ENCODE measurements at regions of chr19 and their contacts with region 1.

Region 1: DNA sequence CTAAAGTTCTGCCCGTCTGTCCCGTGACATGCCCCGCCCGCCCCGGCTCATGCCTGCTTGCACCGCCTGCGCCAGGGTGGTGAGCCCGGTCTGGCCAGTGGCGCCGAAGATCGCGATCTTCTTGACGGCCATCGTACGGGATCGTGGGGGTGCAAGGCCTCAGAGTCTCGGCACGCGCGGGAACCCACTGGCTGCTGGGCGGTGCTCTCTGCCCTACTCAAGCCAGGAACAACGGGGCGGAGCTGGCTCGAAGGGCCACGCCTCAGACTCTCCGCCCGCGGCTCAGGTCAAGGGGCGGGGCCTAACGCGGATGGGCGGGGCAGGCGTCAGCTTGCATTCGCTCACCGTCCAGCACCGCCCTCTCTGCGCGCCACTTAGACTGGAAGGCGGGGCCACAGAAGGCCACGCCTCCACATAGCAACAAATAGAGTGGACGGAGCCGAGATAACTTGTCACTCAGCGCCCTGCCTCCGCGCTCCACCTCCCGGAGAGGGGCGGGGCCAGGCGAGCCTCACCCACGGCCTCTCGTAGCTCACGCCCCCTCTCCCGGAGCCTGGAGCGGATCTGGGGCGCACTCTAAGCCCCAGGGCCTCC is at the start of gene BLVRB:
- DNase-seq: peak; percentile 100
- H3K4me3 Mint-ChIP-seq: peak within 1 kb of the TSS; percentile 98
- H3K27ac Mint-ChIP-seq: peak within 1 kb of the TSS; percentile 92
- H3K4me1 Mint-ChIP-seq: peaks cover 19% of the 10 kb centered on the region
- H3K27me3 Mint-ChIP-seq: no peaks in the 10 kb centered on the region
- CTCF ChIP-seq: no peak
- total RNA-seq, gene BLVRB: 44.0 and 68.7 TPM in 2 replicates

Region 2: GRCh38 chr19:40231544-40232424 is 233.9 kb before region 1 on chr19:
- CTCF ChIA-PET with region 1: no interaction called
- POLR2A ChIA-PET with region 1: no interaction called
- intact Hi-C with region 1: no loop called
- DNase-seq: no peak
- H3K4me3 Mint-ChIP-seq: no peak overlapping the region
- H3K27ac Mint-ChIP-seq: no peak overlapping the region
- H3K4me1 Mint-ChIP-seq: peaks cover 3% of the 10 kb centered on the region
- H3K27me3 Mint-ChIP-seq: no peaks in the 10 kb centered on the region
- CTCF ChIP-seq: no peak

Region 3: GRCh38 chr19:40403262-40403984 is 62.2 kb before region 1 on chr19:
- CTCF ChIA-PET with region 1: no interaction called
- POLR2A ChIA-PET with region 1: interaction called, 19 read pairs
- intact Hi-C with region 1: no loop called
- DNase-seq: peak; percentile 92
- H3K4me3 Mint-ChIP-seq: peak overlapping the region; percentile 79
- H3K27ac Mint-ChIP-seq: no peak overlapping the region
- H3K4me1 Mint-ChIP-seq: peaks cover 20% of the 10 kb centered on the region
- H3K27me3 Mint-ChIP-seq: no peaks in the 10 kb centered on the region
- CTCF ChIP-seq: peak; percentile 6

Region 4: GRCh38 chr19:40444192-40445028 is 21.2 kb before region 1 on chr19 and contains the start of gene SERTAD3:
- CTCF ChIA-PET with region 1: interaction called, 5 read pairs
- POLR2A ChIA-PET with region 1: interaction called, 64 read pairs
- intact Hi-C with region 1: loop called (anchors 2 kb)
- DNase-seq: peak; percentile 96
- H3K4me3 Mint-ChIP-seq: peak within 1 kb of the TSS; percentile 100
- H3K27ac Mint-ChIP-seq: peak within 1 kb of the TSS; percentile 92
- H3K4me1 Mint-ChIP-seq: peaks cover 22% of the 10 kb centered on the region
- H3K27me3 Mint-ChIP-seq: no peaks in the 10 kb centered on the region
- CTCF ChIP-seq: no peak
- total RNA-seq, gene SERTAD3: 23.3 and 29.4 TPM in 2 replicates

Region 5: GRCh38 chr19:40523322-40524047 is 57.8 kb after region 1 on chr19:
- CTCF ChIA-PET with region 1: interaction called, 3 read pairs
- POLR2A ChIA-PET with region 1: interaction called, 5 read pairs
- intact Hi-C with region 1: loop called (anchors 5 kb)
- DNase-seq: peak; percentile 79
- H3K4me3 Mint-ChIP-seq: no peak overlapping the region
- H3K27ac Mint-ChIP-seq: no peak overlapping the region
- H3K4me1 Mint-ChIP-seq: peaks cover 7% of the 10 kb centered on the region
- H3K27me3 Mint-ChIP-seq: peaks cover 15% of the 10 kb centered on the region
- CTCF ChIP-seq: peak; percentile 42

Region 6: DNA sequence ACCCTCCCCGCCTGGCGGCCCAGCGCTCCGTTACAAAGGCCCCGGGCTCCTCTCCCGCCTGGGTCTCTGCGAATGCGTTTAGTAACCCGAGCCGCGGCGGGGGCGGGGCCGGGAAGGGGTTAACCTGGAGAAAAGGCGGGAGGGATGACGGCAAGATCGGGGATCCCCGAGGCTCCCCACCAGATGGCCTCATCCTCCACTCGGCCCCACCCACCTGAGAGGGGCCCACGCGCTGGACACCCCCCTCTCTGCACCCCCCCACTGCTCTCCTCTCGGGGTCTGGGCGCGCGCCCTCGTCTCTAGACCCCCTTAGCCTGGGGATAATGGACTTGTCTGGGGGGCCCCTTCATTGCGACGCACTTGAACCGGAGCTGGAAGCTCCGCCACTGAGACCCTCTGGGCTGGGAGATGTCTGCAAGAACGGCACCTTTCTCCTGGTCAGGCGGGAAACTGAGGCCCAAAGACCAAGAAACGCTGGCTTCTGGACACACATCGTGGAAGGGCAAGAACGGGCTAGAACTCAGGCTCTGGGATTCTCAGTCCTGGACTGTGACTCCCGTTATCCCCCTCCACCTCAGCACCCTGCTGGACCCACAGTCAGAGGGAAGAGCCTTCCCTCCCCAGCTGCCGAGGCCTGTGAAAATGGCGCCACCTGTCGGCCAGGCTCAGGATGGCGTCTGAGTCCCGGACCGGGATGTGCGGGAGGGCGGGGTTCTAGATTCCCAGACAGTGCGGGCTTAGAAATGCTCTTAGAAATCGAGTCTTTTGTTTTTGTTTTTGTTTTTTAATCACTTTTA is 132.7 kb after region 1 on chr19:
- CTCF ChIA-PET with region 1: interaction called, 40 read pairs
- POLR2A ChIA-PET with region 1: interaction called, 94 read pairs
- intact Hi-C with region 1: loop called (anchors 1 kb)
- DNase-seq: peak; percentile 94
- H3K4me3 Mint-ChIP-seq: peak overlapping the region; percentile 54
- H3K27ac Mint-ChIP-seq: no peak overlapping the region
- H3K4me1 Mint-ChIP-seq: peaks cover 44% of the 10 kb centered on the region
- H3K27me3 Mint-ChIP-seq: no peaks in the 10 kb centered on the region
- CTCF ChIP-seq: peak; percentile 96

Region 7: GRCh38 chr19:40633207-40633606 is 167.6 kb after region 1 on chr19:
- CTCF ChIA-PET with region 1: interaction called, 30 read pairs
- POLR2A ChIA-PET with region 1: interaction called, 5 read pairs
- intact Hi-C with region 1: no loop called
- DNase-seq: no peak
- H3K4me3 Mint-ChIP-seq: no peak overlapping the region
- H3K27ac Mint-ChIP-seq: no peak overlapping the region
- H3K4me1 Mint-ChIP-seq: peaks cover 6% of the 10 kb centered on the region
- H3K27me3 Mint-ChIP-seq: no peaks in the 10 kb centered on the region
- CTCF ChIP-seq: no peak